Naive thymus-derived CD4-positive, alpha-beta T cell (primary cell): ENCODE measurements at regions of chr11 and their contacts with region 1.

Region 1: DNA sequence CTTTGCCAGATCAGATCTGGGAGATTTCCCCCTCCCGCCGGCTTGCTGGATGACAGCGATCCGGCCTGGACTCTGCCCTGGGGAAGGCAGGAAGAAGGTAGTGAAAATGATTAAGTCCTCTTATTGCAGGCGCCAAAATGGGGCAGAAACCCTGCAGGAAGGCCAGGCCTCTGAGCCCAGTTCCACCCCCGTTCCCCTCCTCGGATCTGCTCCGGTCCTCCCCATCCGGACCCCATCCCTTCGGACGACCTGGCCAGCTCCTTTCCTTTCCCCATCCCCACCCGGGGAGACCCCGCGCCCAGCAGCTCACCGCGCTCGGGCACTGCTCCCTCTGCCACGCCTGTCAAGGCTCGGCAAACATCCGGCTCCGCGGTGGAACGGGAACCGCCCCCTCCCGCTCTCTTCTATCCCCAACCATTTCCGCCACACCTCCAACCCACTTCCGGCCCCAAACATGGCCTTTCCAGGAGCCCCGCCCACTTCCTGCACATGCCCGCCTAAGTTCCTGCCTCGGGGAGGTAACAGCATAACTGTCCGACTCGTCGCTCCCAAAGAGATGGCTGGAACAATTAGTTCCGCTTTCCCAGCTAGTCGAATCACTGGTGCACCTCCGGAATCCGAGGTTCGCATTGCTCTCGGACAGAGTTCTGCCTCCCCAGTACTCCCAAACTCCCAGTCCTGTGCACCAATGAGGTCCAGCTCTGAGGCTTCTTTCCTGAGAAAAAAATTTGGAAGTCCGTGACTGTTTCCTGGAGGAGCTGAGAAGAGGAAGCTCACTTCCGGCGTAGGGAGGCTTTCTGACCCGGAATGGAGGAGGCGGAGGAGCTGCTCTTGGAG is at the starts of genes ARHGAP1 and ZNF408:
- DNase-seq: peak; percentile 94 to 99 (median 99)
- ATAC-seq: peak; percentile 99
- H3K4me3 ChIP-seq: peak within 1 kb of the TSS; percentile 95
- H3K4me3 Mint-ChIP-seq: peak within 1 kb of the TSS; percentile 91 to 100 (median 99)
- H3K27ac ChIP-seq: peak within 1 kb of the TSS; percentile 75
- H3K27ac Mint-ChIP-seq: peak within 1 kb of the TSS; percentile 82 to 98 (median 96)
- H3K4me1 ChIP-seq: peaks cover 33 to 38% of the 10 kb centered on the region in 2 donors
- H3K4me1 Mint-ChIP-seq: peaks cover 40 to 71% (median 54%) of the 10 kb centered on the region in 7 donors
- H3K27me3 ChIP-seq: no peaks in the 10 kb centered on the region
- H3K27me3 Mint-ChIP-seq: peaks cover 0 to 5% (median 0%) of the 10 kb centered on the region in 5 donors
- total RNA-seq, gene ARHGAP1: 44.6 to 82.5 (median 64.6) TPM
- total RNA-seq, gene ZNF408: 7.8 to 20.0 (median 16.6) TPM

Region 2: DNA sequence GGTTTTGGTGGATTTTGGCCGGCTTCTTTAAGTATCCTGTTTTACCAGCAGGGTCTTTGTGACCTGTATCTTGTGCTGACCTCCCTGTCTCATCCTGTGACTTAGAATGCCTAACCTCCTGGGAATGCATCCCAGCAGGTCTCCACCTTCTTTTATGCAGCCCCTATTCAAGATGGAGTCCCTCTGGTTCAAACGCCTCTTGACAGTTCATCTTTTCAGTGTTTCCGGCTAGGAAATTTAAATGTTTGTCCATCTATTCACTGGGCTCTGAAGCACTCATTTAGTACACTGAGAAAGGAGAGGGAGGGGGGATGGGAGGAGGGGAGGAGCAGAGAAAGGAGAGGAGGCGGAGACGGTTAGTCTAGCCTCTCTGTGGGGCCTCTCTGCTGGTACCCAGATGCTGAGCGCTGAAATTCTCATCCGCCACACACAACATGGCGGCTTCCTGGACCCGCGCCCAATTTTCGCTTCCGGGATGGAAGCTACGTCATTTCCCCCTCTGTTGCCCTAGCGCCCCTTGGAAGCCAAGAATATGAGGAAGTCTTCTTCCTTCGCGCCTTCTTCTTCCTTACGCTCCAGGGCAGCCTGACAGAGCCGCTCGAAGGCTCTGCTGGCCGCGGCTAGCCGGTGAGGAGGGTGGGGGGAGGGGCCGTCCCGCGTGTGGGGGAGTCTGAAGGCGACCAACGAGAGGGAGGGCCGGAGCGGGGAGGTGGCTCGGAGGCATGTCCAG is 1345.3 kb before region 1 on chr11:
- CTCF ChIA-PET with region 1: no interaction called
- POLR2A ChIA-PET with region 1: no interaction called
- intact Hi-C with region 1: loop called in 1 of 2 experiments (anchors 10 kb)
- DNase-seq: peak; percentile 77 to 91 (median 88)
- ATAC-seq: peak; percentile 96
- H3K4me3 ChIP-seq: peak overlapping the region; percentile 93
- H3K4me3 Mint-ChIP-seq: peak overlapping the region; percentile 75 to 87 (median 82)
- H3K27ac ChIP-seq: peak overlapping the region; percentile 73
- H3K27ac Mint-ChIP-seq: peak overlapping the region; percentile 70 to 91 (median 83)
- H3K4me1 ChIP-seq: peaks cover 0 to 5% of the 10 kb centered on the region in 2 donors
- H3K4me1 Mint-ChIP-seq: peaks cover 9 to 31% (median 26%) of the 10 kb centered on the region in 7 donors
- H3K27me3 ChIP-seq: no peaks in the 10 kb centered on the region
- H3K27me3 Mint-ChIP-seq: peaks cover 0 to 28% (median 7%) of the 10 kb centered on the region in 5 donors

Region 3: GRCh38 chr11:46121724-46122477 is 578.6 kb before region 1 on chr11:
- CTCF ChIA-PET with region 1: no interaction called
- POLR2A ChIA-PET with region 1: no interaction called
- intact Hi-C with region 1: loop called in 1 of 2 experiments (anchors 5 kb)
- DNase-seq: peak in 7 of 9 donors; percentile 20 to 85 (median 80)
- ATAC-seq: peak; percentile 69
- H3K4me3 ChIP-seq: peak overlapping the region; percentile 53
- H3K4me3 Mint-ChIP-seq: peak overlapping the region; percentile 83 to 95 (median 93)
- H3K27ac ChIP-seq: peak overlapping the region; percentile 80
- H3K27ac Mint-ChIP-seq: peak overlapping the region; percentile 87 to 98 (median 95)
- H3K4me1 ChIP-seq: peaks cover 18 to 22% of the 10 kb centered on the region in 2 donors
- H3K4me1 Mint-ChIP-seq: peaks cover 24 to 39% (median 35%) of the 10 kb centered on the region in 7 donors
- H3K27me3 ChIP-seq: no peaks in the 10 kb centered on the region
- H3K27me3 Mint-ChIP-seq: no peaks in the 10 kb centered on the region

Region 4: GRCh38 chr11:46669711-46670139 is 30.7 kb before region 1 on chr11:
- CTCF ChIA-PET with region 1: interaction called, 20 read pairs
- POLR2A ChIA-PET with region 1: interaction called, 135 read pairs
- intact Hi-C with region 1: loop called (anchors 1 kb)
- DNase-seq: no peak
- ATAC-seq: no peak
- H3K4me3 ChIP-seq: no peak overlapping the region
- H3K4me3 Mint-ChIP-seq: peak overlapping the region; percentile 24 to 82 (median 54)
- H3K27ac ChIP-seq: peak overlapping the region; percentile 34
- H3K27ac Mint-ChIP-seq: peak overlapping the region; percentile 38 to 95 (median 80)
- H3K4me1 ChIP-seq: peaks cover 48 to 59% of the 10 kb centered on the region in 2 donors
- H3K4me1 Mint-ChIP-seq: peaks cover 36 to 69% (median 50%) of the 10 kb centered on the region in 7 donors
- H3K27me3 ChIP-seq: no peaks in the 10 kb centered on the region
- H3K27me3 Mint-ChIP-seq: no peaks in the 10 kb centered on the region

Region 5: DNA sequence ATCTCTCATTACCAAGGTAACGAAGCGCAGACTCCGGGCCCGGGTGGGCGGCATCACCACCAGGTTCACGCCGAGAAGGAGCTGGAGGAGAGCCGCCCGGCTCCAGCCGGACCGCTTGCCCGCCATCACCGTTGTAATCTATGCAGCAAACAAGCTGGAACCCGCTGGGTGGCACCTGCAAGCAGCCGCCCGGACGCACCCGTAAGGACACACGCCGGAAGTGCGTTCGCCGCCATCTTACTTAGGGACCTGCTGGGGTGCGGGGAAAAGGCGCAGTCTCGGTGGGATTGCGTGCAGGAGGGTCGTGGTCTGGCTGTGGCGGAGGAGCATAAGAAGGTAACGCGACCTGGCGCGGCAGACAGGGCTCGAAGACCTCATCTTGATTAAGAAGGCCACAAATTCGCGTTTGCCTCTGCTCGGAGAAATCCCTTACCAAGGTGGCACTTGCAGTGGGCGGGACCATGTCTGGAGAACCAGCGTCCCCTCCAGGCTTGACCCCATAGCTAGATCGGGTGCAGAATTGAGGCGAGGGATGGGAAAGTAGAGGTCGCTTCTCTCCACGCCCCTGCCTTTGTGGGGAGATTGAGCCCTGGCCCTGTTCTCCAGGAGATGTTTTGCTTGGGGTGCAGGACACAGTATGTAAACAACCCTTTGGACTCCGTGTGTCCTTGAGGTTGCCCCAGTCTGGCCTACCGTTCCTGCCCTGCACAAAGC is 548.4 kb after region 1 on chr11 and contains the start of gene ACP2:
- CTCF ChIA-PET with region 1: no interaction called
- POLR2A ChIA-PET with region 1: interaction called, 4 read pairs
- intact Hi-C with region 1: loop called in 1 of 2 experiments (anchors 2 kb)
- DNase-seq: peak; percentile 83 to 91 (median 86)
- ATAC-seq: peak; percentile 99
- H3K4me3 ChIP-seq: peak within 1 kb of the TSS; percentile 93
- H3K4me3 Mint-ChIP-seq: peak within 1 kb of the TSS; percentile 93 to 100 (median 98)
- H3K27ac ChIP-seq: peak within 1 kb of the TSS; percentile 87
- H3K27ac Mint-ChIP-seq: peak within 1 kb of the TSS; percentile 94 to 100 (median 98)
- H3K4me1 ChIP-seq: peaks cover 11 to 15% of the 10 kb centered on the region in 2 donors
- H3K4me1 Mint-ChIP-seq: peaks cover 13 to 39% (median 29%) of the 10 kb centered on the region in 7 donors
- H3K27me3 ChIP-seq: no peaks in the 10 kb centered on the region
- H3K27me3 Mint-ChIP-seq: no peaks in the 10 kb centered on the region
- total RNA-seq, gene ACP2: 17.6 to 38.1 (median 24.3) TPM

Region 6: DNA sequence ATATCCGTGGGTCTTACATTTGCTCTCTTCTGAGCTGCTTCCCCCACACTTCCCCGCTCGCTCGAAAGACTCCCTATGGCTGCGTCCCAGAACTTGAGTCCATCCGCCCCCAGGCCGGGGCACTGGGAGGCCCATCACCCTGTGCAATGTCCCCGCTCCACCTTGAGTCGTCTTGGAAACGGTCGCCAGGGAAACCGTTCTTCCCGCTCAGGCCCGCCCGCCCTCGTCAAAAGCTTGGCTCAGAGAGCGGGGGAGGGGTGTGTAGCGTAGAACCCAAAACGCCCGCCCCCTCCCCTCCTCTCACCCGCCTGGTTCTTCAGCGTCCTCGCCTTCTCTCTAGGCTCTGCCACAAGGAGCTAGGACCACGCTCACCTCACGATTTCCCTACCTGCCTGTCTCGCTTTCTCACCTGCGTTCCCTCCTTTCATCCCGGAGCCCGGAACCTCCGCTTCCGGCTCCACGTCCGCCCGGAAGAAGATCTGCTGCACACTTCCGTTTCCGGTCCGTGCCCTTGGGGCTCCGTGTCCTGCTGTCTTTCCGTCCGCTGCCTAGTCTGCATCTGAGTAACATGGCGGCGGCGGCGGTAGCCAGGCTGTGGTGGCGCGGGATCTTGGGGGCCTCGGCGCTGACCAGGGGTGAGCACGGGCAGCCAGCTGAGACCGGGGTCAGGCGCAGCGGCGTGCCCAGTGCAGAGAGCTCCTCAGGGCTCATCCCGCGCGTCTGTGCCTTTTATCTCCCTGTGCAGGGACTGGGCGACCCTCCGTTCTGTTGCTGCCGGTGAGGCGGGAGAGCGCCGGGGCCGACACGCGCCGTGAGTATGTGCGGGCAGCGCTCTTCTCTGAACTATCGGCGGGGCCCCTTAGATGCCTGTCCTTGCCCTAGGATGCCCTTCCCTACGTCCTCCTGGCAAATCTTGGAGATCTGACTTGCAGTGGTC is 878.3 kb after region 1 on chr11 and contains the starts of genes KBTBD4 and NDUFS3:
- CTCF ChIA-PET with region 1: no interaction called
- POLR2A ChIA-PET with region 1: no interaction called
- intact Hi-C with region 1: loop called in 1 of 2 experiments (anchors 2 kb)
- DNase-seq: peak; percentile 85 to 95 (median 88)
- ATAC-seq: peak; percentile 97
- H3K4me3 ChIP-seq: peak within 1 kb of the TSS; percentile 95
- H3K4me3 Mint-ChIP-seq: peak within 1 kb of the TSS; percentile 95 to 100 (median 99)
- H3K27ac ChIP-seq: peak within 1 kb of the TSS; percentile 80
- H3K27ac Mint-ChIP-seq: peak within 1 kb of the TSS; percentile 97 to 100 (median 99)
- H3K4me1 ChIP-seq: peaks cover 26 to 28% of the 10 kb centered on the region in 2 donors
- H3K4me1 Mint-ChIP-seq: peaks cover 17 to 51% (median 41%) of the 10 kb centered on the region in 7 donors
- H3K27me3 ChIP-seq: no peaks in the 10 kb centered on the region
- H3K27me3 Mint-ChIP-seq: no peaks in the 10 kb centered on the region
- total RNA-seq, gene KBTBD4: 15.0 to 26.5 (median 20.9) TPM
- total RNA-seq, gene NDUFS3: 68.6 to 116 (median 85.2) TPM